Sciatic nerve (tissue), 2 donors: ENCODE measurements at regions of chr18 and their contacts with region 1.

Region 1: DNA sequence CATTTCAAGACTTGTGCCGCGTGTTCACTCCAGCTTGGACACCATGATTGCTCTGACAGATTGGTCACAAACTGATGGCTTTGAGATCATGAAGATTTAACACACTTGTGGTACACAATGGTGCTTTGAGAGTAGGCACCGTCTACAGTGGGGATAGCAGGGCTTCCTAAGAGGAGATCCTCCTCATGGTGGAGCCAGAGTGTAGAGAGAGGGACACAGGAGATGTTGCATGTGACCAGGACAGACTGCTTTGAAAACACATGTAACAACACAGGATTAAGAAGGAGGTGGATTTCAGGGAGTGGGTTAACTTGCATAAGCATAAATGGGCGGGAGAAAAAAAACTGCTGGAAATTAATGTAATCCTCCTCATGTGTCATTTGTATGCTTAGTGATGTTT is 95.7 kb upstream of the LINC00305 start:
- DNase-seq: no peak
- ATAC-seq: peak; percentile 55

Region 2: DNA sequence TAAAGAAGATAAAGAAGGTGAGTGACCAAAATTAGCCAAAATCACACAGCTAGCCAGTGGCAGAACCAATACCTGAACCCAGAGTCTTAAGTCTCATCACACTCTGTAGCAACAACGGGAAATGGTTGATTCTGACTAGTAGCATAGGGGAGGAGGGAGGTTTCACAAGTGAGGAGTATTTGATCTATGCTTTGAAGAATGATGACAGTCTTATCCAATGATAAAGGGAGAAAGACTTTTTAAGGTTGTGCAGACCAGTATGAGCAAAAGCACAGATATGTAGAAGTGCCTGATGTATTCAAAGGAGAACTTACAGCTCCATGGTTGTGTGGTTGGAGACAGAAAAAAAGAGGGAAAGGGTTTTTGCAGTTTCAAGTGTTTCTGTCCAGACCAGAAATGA is 45.0 kb before region 1 on chr18:
- intact Hi-C with region 1: no loop called
- DNase-seq: no peak
- ATAC-seq: no peak

Region 3: GRCh38 chr18:64287926-64288325 is 43.4 kb after region 1 on chr18:
- intact Hi-C with region 1: loop called (anchors 1 kb)
- DNase-seq: no peak
- ATAC-seq: no peak